H1 (cell line): ENCODE measurements at regions of chr22 and their contacts with region 1.

Region 1: DNA sequence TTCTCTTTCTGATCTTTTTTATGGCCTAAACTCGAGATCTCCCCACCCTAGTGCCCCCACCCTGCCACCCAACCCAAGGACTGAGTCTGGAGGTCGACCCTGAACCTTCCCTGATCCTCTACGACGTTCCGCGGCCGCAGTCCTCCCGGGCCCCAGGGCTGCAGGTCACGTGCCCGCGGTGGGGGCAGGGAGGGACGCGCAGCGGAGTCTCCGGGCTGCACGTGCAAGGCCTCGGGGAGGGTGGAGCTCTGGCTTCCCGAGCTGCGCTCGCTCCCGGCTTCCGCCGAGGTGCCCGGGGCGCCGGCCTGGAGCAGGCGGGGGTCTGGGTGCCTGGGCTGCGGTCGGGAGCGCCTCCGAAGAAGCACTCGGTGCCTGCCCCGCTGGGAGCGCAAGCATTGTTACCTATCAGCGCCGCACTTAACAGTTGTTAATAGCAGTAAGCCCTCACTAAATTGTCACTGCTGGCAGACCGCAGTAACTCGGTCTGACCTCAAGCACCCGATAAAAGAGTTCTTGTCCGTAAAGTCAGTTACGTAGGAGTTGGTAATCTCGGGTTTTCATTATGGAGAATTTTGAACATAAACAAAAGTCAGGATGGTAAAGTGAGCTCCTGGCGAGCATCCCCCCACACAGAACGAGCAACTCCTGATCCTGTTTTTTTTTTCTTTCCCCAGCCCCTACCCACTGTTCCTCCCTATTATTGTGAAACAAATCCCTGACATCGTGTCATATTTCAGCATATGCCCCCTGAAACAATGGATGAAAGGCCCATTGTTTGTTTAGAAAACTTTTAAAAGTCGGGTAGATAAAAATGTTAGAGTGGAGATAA is 69.7 kb upstream of the EP300 start:
- DNase-seq: peak; percentile 82 to 92
- H3K4me3 ChIP-seq: peak overlapping the region; percentile 35 to 79 (median 53)
- H3K27ac ChIP-seq: peak overlapping the region; percentile 95
- H3K4me1 ChIP-seq: peaks cover 0 to 11% (median 5%) of the 10 kb centered on the region in 4 experiments; a peak in 6 of 7 replicates
- H3K27me3 ChIP-seq: peaks cover 0 to 2% (median 0%) of the 10 kb centered on the region in 4 experiments; a peak in 2 of 7 replicates
- CTCF ChIP-seq: no peak
- EP300 ChIP-seq: peak in 1 of 2 experiments; percentile 70; a peak in 1 of 3 replicates
- POLR2A ChIP-seq: peak; percentile 79 to 81
- RAD21 ChIP-seq: 0 out of 4 replicates have a peak, but pooled peaks of 1 of the 2 experiments have one; percentile 1

Region 2: GRCh38 chr22:40950962-40951794 is 71.5 kb before region 1 on chr22 and contains the start of gene RBX1:
- CTCF ChIA-PET with region 1: interaction called, 3 read pairs
- POLR2A ChIA-PET with region 1: interaction called, 24 read pairs
- DNase-seq: peak; percentile 94 to 99
- H3K4me3 ChIP-seq: peak within 1 kb of the TSS; percentile 87 to 98 (median 92)
- H3K27ac ChIP-seq: peak within 1 kb of the TSS; percentile 95
- H3K4me1 ChIP-seq: peaks cover 0 to 2% (median under 1%) of the 10 kb centered on the region in 4 experiments; a peak in 3 of 7 replicates
- H3K27me3 ChIP-seq: no peaks in the 10 kb centered on the region
- CTCF ChIP-seq: no peak
- EP300 ChIP-seq: no peak
- POLR2A ChIP-seq: peak; percentile 54 to 84
- RAD21 ChIP-seq: no peak; a peak in 1 of 4 replicates
- total RNA-seq, gene RBX1: 74.4 and 76.5 TPM in 2 replicates

Region 3: GRCh38 chr22:41009202-41009943 is 13.3 kb before region 1 on chr22:
- CTCF ChIA-PET with region 1: no interaction called
- POLR2A ChIA-PET with region 1: interaction called, 47 read pairs
- DNase-seq: no peak
- H3K4me3 ChIP-seq: no peak overlapping the region
- H3K27ac ChIP-seq: no peak overlapping the region
- H3K4me1 ChIP-seq: peaks cover 0 to 6% (median 4%) of the 10 kb centered on the region in 4 experiments; a peak in 4 of 7 replicates
- H3K27me3 ChIP-seq: no peaks in the 10 kb centered on the region
- CTCF ChIP-seq: no peak
- EP300 ChIP-seq: no peak
- POLR2A ChIP-seq: no peak
- RAD21 ChIP-seq: no peak

Region 4: GRCh38 chr22:41043722-41044121 is 21.0 kb after region 1 on chr22:
- CTCF ChIA-PET with region 1: interaction called, 3 read pairs
- POLR2A ChIA-PET with region 1: interaction called, 14 read pairs
- DNase-seq: no peak
- H3K4me3 ChIP-seq: no peak overlapping the region
- H3K27ac ChIP-seq: no peak overlapping the region
- H3K4me1 ChIP-seq: no peaks in the 10 kb centered on the region; a peak in 1 of 7 replicates
- H3K27me3 ChIP-seq: no peaks in the 10 kb centered on the region
- CTCF ChIP-seq: no peak
- EP300 ChIP-seq: no peak
- POLR2A ChIP-seq: no peak
- RAD21 ChIP-seq: no peak

Region 5: DNA sequence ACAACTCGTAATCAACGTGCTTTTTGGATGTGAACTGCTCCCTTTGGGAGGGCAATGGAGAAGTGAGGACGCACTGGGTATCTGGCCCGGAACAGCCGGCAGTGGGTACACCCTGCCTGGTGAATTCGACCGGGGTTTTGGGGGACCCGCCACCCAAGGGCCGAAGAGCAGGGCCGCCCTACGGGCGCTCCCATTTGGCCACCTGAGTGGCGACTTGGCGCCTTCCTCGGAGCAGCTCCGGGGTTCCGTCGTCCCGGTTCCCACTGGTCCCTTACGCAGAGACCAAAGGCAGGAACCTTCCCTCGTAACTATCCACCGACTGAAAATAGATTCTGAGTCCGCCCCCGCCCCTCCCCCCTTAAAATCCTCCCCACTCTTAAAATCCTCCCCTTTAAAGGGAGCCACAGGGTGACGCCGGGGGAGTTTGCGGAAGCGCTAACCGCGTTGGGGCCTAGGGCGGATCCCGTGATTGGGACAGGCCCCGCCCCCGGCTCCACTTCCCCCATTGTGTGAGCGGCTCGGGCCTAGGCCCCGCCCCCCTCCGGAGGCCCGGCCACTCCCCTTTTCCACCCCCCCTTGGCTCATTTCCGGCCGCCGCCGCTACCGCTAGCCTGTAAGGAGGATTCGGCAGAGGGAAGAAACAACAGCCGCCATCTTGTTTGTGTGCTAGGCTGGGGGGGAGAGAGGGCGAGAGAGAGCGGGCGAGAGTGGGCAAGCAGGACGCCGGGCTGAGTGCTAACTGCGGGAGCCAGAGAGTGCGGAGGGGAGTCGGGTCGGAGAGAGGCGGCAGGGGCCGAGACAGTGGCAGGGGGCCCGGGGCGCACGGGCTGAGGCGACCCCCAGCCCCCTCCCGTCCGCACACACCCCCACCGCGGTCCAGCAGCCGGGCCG is 68.7 kb after region 1 on chr22:
- CTCF ChIA-PET with region 1: no interaction called
- POLR2A ChIA-PET with region 1: interaction called, 59 read pairs
- DNase-seq: peak; percentile 96 to 98
- H3K4me3 ChIP-seq: peak overlapping the region; percentile 81 to 93 (median 87)
- H3K27ac ChIP-seq: peak overlapping the region; percentile 100
- H3K4me1 ChIP-seq: no peaks in the 10 kb centered on the region; a peak in 3 of 7 replicates
- H3K27me3 ChIP-seq: no peaks in the 10 kb centered on the region
- CTCF ChIP-seq: no peak
- EP300 ChIP-seq: 0 out of 3 replicates have a peak, but pooled peaks of 1 of the 2 experiments have one; percentile 22
- POLR2A ChIP-seq: peak; percentile 78 to 80
- RAD21 ChIP-seq: no peak

Region 6: DNA sequence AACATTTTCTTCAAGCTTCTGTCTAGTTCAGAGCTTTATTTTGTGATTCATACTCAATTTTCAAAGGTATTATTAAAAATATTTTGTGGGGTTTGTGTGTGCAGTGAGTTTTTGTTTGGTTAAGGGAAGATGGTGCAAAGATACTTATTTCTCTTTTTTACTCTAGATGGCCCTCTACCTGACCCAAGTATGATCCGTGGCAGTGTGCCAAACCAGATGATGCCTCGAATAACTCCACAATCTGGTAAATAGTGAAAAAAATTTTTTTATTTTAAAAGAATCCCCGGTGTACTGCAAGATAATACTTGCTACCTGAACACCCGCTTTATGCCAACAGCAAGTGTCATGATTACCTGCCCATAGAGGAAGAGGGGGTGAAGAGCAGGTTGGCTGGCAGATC is 123.9 kb after region 1 on chr22:
- CTCF ChIA-PET with region 1: no interaction called
- POLR2A ChIA-PET with region 1: no interaction called
- DNase-seq: no peak
- H3K4me3 ChIP-seq: no peak overlapping the region
- H3K27ac ChIP-seq: no peak overlapping the region
- H3K4me1 ChIP-seq: no peaks in the 10 kb centered on the region
- H3K27me3 ChIP-seq: no peaks in the 10 kb centered on the region
- CTCF ChIP-seq: no peak
- EP300 ChIP-seq: no peak
- POLR2A ChIP-seq: no peak
- RAD21 ChIP-seq: no peak